CD8-positive, alpha-beta T cell (primary cell): ENCODE measurements at regions of chr17 and their contacts with region 1.

Region 1: DNA sequence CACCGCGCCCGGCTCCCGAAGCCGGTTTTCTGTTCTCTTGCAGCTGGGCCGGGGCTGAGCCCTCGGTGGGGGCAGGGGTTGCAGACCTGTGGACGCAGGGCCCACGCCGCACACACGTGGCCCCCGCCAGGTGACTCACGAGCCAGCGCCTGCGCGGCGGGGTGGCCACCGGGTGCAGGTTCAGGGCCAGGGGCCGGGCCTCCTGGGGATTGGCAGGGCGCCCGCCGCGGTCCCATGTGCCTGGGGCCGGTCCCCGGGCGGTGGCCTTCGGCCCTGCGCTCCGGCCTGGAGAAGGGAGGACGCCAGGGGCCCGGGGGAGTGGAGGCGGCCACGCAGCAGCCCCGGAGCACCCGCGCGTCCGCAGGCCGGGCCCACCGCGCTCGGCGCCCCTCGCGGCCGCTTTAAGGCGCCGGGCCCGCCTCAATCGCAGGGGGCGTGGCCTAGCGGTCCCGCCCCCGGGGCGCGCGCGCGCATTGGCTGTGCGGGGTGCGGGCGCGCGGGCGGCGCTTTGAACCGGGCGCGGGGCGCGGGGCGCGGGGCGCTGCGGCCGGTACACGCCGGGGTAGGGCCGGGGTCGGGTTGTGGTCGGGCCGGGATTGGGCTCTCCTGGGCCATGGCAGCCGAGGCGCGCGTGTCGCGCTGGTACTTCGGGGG is at the start of gene SLC25A10:
- DNase-seq: peak; percentile 46 to 89 (median 74)
- ATAC-seq: peak; percentile 84
- H3K4me3 ChIP-seq: peak within 1 kb of the TSS; percentile 38 to 53
- H3K4me3 Mint-ChIP-seq: peak within 1 kb of the TSS; percentile 83
- H3K27ac ChIP-seq: no peak within 1 kb of the TSS
- H3K27ac Mint-ChIP-seq: no peak within 1 kb of the TSS
- H3K4me1 ChIP-seq: peaks cover 25% of the 10 kb centered on the region
- H3K4me1 Mint-ChIP-seq: peaks cover 13% of the 10 kb centered on the region
- H3K27me3 ChIP-seq: no peaks in the 10 kb centered on the region
- H3K27me3 Mint-ChIP-seq: no peaks in the 10 kb centered on the region
- CTCF ChIP-seq: no peak
- total RNA-seq, gene SLC25A10: 3.7 to 5.4 TPM

Region 2: DNA sequence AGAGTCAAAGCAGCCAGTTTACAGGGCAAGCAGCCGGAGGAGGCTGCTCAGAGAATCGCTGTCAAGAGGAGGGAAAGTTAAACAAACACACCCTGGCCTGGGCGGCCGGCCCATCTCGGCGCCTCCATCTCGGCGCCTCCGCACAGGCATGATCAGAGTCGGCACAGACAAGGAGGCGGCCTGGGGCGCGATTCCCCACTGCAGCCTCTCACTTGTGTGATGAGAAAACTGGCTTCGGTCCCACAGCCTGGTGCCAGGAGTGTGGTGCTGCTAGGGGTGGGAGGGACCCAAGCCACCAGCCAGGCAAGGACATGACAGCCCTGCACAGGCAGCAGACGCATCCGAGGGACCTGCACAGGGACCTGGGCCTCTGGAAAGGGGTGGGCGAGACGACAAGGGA is 434.5 kb before region 1 on chr17:
- CTCF ChIA-PET with region 1: no interaction called
- POLR2A ChIA-PET with region 1: no interaction called
- intact Hi-C with region 1: no loop called
- DNase-seq: no peak
- ATAC-seq: no peak
- H3K4me3 ChIP-seq: no peak overlapping the region
- H3K4me3 Mint-ChIP-seq: no peak overlapping the region
- H3K27ac ChIP-seq: no peak overlapping the region
- H3K27ac Mint-ChIP-seq: no peak overlapping the region
- H3K4me1 ChIP-seq: no peaks in the 10 kb centered on the region
- H3K4me1 Mint-ChIP-seq: peaks cover 2% of the 10 kb centered on the region
- H3K27me3 ChIP-seq: no peaks in the 10 kb centered on the region
- H3K27me3 Mint-ChIP-seq: no peaks in the 10 kb centered on the region
- CTCF ChIP-seq: no peak

Region 3: GRCh38 chr17:81967533-81968395 is 255.8 kb after region 1 on chr17:
- CTCF ChIA-PET with region 1: no interaction called
- POLR2A ChIA-PET with region 1: no interaction called
- intact Hi-C with region 1: loop called in 1 of 2 experiments (anchors 5 kb)
- DNase-seq: peak; percentile 64 to 93 (median 87)
- ATAC-seq: peak; percentile 91
- H3K4me3 ChIP-seq: peak overlapping the region; percentile 45 to 64
- H3K4me3 Mint-ChIP-seq: peak overlapping the region; percentile 72
- H3K27ac ChIP-seq: peak overlapping the region in 1 of 2 experiments; percentile 27
- H3K27ac Mint-ChIP-seq: peak overlapping the region; percentile 77
- H3K4me1 ChIP-seq: peaks cover 33% of the 10 kb centered on the region
- H3K4me1 Mint-ChIP-seq: peaks cover 27% of the 10 kb centered on the region
- H3K27me3 ChIP-seq: peaks cover 0 to 3% of the 10 kb centered on the region in 2 experiments
- H3K27me3 Mint-ChIP-seq: peaks cover 2% of the 10 kb centered on the region
- CTCF ChIP-seq: no peak